OCI-LY7 (cell line): ENCODE measurements at regions of chr7 and their contacts with region 1.

Region 1: DNA sequence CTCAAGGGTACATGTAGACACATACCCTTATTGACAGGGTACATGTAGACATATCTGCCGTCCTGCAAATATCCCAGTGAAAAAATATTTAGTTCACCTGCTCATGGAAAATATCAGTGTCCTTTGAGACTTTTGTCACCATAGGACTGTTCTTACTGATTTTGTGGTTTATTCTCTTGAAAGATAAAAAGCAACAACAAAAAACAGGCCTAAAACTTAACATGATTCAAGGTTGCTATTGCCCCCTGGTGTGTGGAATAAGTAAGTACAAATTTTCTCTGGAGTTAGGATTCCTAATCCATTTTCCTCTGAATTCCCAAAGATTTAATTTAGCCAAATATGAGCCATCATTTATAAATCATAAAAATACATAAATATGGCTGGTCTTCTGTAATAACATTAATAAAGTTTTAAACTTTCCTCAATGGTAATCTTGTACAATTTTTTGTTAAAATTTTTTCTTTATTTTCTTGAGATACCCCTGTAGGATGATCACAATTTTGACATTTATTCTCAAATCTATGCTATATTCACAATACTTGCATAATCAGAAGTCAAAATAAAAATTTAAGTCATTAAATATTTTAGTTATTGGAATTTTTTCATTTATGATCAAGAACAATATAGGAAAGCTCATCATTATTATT is 741.4 kb upstream of the POT1 start:
- DNase-seq: peak; percentile 1
- H3K4me3 ChIP-seq: no peak overlapping the region
- H3K27ac ChIP-seq: no peak overlapping the region
- H3K4me1 ChIP-seq: no peaks in the 10 kb centered on the region
- CTCF ChIP-seq: peak; percentile 83

Region 2: DNA sequence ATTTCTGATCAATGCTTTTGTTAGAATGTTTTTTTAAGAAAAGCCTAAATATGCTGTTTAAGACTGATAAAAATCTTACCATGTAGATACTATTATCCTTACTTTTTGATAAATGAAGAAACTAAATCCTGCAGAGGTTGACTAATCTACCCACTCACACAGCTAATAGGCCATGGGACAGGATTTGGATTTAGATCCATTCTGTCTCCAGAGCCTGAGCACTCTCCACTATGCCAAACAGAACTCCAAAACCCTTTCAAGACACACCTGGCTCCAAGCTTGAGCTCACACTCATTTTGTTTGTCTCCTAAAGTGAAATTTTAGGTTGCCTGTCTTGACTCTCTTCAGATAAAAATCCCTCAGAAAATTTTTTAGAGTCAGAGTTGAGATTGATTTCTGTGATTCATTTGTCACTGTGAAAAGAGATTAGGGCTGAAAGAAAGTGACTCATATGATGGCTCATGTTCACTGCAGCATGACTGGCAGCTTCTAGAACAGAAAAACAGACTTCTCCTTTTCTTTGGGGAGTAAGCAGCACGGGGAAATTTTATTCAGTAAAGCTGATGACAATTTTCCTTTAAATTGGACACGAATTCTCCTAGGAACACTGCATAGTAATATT is 609.2 kb before region 1 on chr7:
- CTCF ChIA-PET with region 1: interaction called, 3 read pairs
- POLR2A ChIA-PET with region 1: no interaction called
- intact Hi-C with region 1: loop called (anchors 5 kb)
- DNase-seq: no peak
- H3K4me3 ChIP-seq: no peak overlapping the region
- H3K27ac ChIP-seq: no peak overlapping the region
- H3K4me1 ChIP-seq: no peaks in the 10 kb centered on the region
- CTCF ChIP-seq: no peak